GM12878 (cell line): ENCODE measurements at regions of chr4 and their contacts with region 1.

Region 1: GRCh38 chr4:112279025-112279881 is 6.5 kb downstream of the TIFA start:
- DNase-seq: no peak
- ATAC-seq: peak; percentile 65
- H3K4me3 ChIP-seq: peak overlapping the region; percentile 80
- H3K27ac ChIP-seq: peak overlapping the region; percentile 99
- H3K4me1 ChIP-seq: peaks cover 33% of the 10 kb centered on the region
- H3K27me3 ChIP-seq: no peaks in the 10 kb centered on the region
- CTCF ChIP-seq: no peak
- EP300 ChIP-seq: peak; percentile 46 to 49; a peak in 2 of 4 replicates
- POLR2A ChIP-seq: no peak
- RAD21 ChIP-seq: no peak

Region 2: DNA sequence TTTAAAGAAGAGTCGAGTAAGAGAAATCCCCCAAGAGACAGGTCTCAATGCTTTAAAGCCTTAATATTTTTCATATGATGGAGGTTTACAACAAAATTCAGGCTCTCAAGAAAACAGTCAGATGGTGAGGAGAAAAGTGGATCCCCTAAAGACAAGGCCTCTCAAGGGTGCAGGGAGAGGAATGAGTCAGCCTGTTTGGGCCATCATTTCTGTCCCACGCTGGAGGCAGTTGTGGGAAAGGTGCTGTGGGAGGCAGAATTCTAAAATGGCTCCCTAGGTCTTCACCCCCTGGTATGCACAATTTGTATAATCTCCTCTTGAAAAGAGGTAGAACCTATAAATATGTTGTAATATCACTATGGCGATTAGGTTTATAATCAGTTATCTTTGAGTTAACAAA is 11.1 kb after region 1 on chr4:
- CTCF ChIA-PET with region 1: interaction called, 21 read pairs
- POLR2A ChIA-PET with region 1: interaction called, 37 read pairs
- RAD21 ChIA-PET with region 1: interaction called, 25 read pairs
- SMC1A ChIA-PET with region 1: interaction called, 50 read pairs
- in situ Hi-C with region 1: no loop called
- intact Hi-C with region 1: no loop called
- DNase-seq: no peak
- ATAC-seq: peak; percentile 14
- H3K4me3 ChIP-seq: 0 out of 2 replicates have a peak overlapping the region, but pooled peaks have one; percentile 37
- H3K27ac ChIP-seq: peak overlapping the region; percentile 99
- H3K4me1 ChIP-seq: peaks cover 24% of the 10 kb centered on the region
- H3K27me3 ChIP-seq: no peaks in the 10 kb centered on the region
- CTCF ChIP-seq: no peak
- EP300 ChIP-seq: no peak
- POLR2A ChIP-seq: no peak
- RAD21 ChIP-seq: 0 out of 2 replicates have a peak, but pooled peaks have one; percentile 18

Region 3: DNA sequence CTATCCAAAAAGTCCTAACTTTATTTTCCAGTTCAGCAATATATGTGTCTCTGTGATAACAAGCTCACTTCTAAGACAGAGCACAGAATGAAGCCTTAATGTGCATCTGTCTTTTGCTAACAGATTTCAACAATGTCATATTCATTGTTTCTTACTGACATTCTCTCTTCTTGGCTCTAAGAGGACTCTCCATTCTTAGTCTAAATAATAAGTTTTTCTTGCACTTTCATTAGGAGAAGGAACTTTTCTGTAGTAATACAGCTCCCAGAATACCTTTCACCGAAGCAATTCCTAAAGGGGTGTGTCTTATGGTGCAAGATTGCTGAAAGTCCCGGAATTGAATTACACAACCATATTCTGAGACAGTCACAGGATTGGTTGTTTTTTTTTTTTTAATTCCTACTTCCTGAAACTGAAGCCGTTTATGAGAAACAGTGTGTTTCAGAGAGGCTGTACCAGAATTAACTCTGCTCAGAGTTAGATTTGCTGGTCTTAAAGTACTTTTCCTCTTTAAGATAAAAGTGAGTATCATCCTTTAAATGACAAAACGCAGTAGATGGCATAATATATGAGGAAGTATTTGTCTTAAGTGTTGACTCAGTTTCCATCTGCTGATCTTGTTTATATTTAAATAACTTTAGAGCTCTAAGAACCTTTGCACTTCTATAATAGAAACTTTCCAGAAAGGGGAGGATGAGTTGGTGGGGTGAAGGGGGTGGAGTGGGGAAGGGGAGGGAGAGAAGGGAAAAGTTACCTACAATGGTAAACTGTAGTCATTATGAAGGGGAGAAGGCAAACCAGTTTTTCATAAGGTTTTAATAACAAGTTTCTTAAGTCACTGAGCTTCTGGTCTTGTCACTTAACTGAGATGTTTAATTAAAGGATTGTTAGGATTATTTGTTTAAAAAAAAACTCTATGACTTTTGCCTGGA is 18.0 kb after region 1 on chr4 and contains the start of gene ALPK1:
- CTCF ChIA-PET with region 1: interaction called, 6 read pairs
- POLR2A ChIA-PET with region 1: interaction called, 45 read pairs
- RAD21 ChIA-PET with region 1: interaction called, 73 read pairs
- SMC1A ChIA-PET with region 1: interaction called, 74 read pairs
- in situ Hi-C with region 1: no loop called
- intact Hi-C with region 1: no loop called
- DNase-seq: no peak
- ATAC-seq: peak; percentile 89
- H3K4me3 ChIP-seq: peak within 1 kb of the TSS; percentile 67
- H3K27ac ChIP-seq: peak within 1 kb of the TSS; percentile 62
- H3K4me1 ChIP-seq: peaks cover 7% of the 10 kb centered on the region
- H3K27me3 ChIP-seq: no peaks in the 10 kb centered on the region
- CTCF ChIP-seq: no peak
- EP300 ChIP-seq: no peak
- POLR2A ChIP-seq: no peak
- RAD21 ChIP-seq: no peak
- polyA plus RNA-seq, gene ALPK1: 8.5 to 9.7 TPM

Region 4: DNA sequence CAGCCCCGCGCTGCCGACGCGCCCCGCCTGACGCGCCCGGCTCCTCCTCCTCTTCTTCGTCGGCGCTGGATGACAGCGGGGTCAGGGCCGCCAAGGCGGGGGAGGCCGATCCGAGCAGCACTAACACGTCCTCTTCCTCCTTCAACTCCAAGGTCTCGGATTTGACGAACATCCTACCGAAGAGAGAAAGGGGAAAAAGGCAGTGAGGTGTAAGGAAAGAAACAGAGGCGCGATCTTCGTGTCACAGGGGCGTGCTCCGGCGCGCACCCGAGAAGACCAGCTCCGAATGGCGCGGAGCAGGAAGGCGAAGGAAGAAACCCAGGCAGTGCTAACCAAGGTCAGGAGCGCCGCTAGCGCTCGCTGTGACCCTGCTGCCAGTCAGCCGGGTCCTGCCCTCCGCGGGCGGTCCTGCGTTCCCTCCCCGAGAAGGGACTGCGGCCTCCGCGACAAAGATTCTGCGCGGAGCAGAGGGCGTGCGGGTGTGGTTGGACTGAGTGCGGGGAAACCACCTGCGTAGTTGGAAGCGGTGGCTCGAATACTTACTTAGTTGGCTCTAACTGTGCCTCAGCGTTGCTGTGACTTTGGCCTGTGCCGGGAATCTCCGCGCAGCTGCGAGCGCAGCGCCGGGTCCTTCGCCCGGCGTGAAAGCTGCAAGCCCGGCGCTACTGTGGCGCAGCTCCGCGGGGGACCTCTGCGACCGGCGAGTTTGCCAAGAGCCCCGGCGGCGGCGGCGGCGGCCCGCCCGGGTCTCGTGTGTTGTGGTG is 236.2 kb after region 1 on chr4:
- CTCF ChIA-PET with region 1: interaction called, 22 read pairs
- POLR2A ChIA-PET with region 1: interaction called, 55 read pairs
- RAD21 ChIA-PET with region 1: interaction called, 29 read pairs
- SMC1A ChIA-PET with region 1: interaction called, 12 read pairs
- in situ Hi-C with region 1: no loop called
- intact Hi-C with region 1: loop called (anchors 5 kb)
- DNase-seq: no peak
- ATAC-seq: peak; percentile 65
- H3K4me3 ChIP-seq: peak overlapping the region; percentile 80
- H3K27ac ChIP-seq: peak overlapping the region; percentile 57
- H3K4me1 ChIP-seq: peaks cover 4% of the 10 kb centered on the region
- H3K27me3 ChIP-seq: peaks cover 5 to 14% of the 10 kb centered on the region in 2 experiments
- CTCF ChIP-seq: no peak
- EP300 ChIP-seq: no peak
- POLR2A ChIP-seq: peak; percentile 68
- RAD21 ChIP-seq: no peak

Region 5: GRCh38 chr4:112616984-112617383 is 337.7 kb after region 1 on chr4:
- CTCF ChIA-PET with region 1: no interaction called
- POLR2A ChIA-PET with region 1: no interaction called
- RAD21 ChIA-PET with region 1: no interaction called
- SMC1A ChIA-PET with region 1: no interaction called
- in situ Hi-C with region 1: no loop called
- intact Hi-C with region 1: no loop called
- DNase-seq: no peak
- ATAC-seq: no peak
- H3K4me3 ChIP-seq: no peak overlapping the region
- H3K27ac ChIP-seq: no peak overlapping the region
- H3K4me1 ChIP-seq: no peaks in the 10 kb centered on the region
- H3K27me3 ChIP-seq: no peaks in the 10 kb centered on the region
- CTCF ChIP-seq: no peak
- EP300 ChIP-seq: no peak
- POLR2A ChIP-seq: no peak
- RAD21 ChIP-seq: no peak